ENCODE measurements at regions of chr19 and their contacts with region 1.

Region 1: GRCh38 chr19:11482384-11483050 is 1.7 kb upstream of the ELAVL3 start:
- DNase-seq: peak; percentile 84
- H3K4me3 Mint-ChIP-seq: peak overlapping the region; percentile 82
- H3K27ac Mint-ChIP-seq: peak overlapping the region; percentile 88
- H3K4me1 Mint-ChIP-seq: peaks cover 16% of the 10 kb centered on the region
- H3K27me3 Mint-ChIP-seq: peaks cover 25% of the 10 kb centered on the region

Region 2: GRCh38 chr19:11293433-11294389 is 188.8 kb before region 1 on chr19:
- intact Hi-C with region 1: loop called (anchors 1 kb)
- DNase-seq: peak; percentile 72
- H3K4me3 Mint-ChIP-seq: peak overlapping the region; percentile 49
- H3K27ac Mint-ChIP-seq: no peak overlapping the region
- H3K4me1 Mint-ChIP-seq: peaks cover 10% of the 10 kb centered on the region
- H3K27me3 Mint-ChIP-seq: peaks cover 20% of the 10 kb centered on the region

Region 3: GRCh38 chr19:11380653-11381534 is 101.6 kb before region 1 on chr19:
- intact Hi-C with region 1: loop called (anchors 1 kb)
- DNase-seq: peak; percentile 96
- H3K4me3 Mint-ChIP-seq: peak overlapping the region; percentile 88
- H3K27ac Mint-ChIP-seq: peak overlapping the region; percentile 100
- H3K4me1 Mint-ChIP-seq: peaks cover 32% of the 10 kb centered on the region
- H3K27me3 Mint-ChIP-seq: peaks cover 16% of the 10 kb centered on the region

Region 4: DNA sequence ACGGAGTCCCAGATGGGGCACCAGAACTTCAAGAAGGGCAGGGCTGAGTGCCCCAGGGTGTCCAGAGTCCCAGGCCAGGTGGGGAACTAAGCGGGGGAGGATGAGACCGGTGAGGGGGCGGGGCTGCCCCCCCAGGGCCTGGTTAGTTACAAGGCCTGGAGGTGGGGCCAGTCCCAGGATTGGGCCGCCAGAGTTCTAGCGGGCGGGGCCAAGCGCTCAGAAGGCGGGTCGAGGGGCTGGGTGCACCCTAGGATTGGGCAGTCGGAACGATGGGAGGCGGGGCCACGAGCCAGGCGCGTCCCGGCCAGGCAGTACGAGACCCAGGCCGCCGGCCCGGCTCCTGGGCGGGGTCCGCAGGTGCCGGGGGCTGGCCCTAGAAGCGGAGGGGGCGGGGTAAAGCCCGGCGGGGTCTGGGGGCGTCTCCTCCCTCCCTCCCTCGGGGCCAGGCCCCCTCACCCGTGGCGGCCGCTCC is 22.6 kb after region 1 on chr19:
- intact Hi-C with region 1: loop called (anchors 1 kb)
- DNase-seq: peak; percentile 97
- H3K4me3 Mint-ChIP-seq: peak overlapping the region; percentile 91
- H3K27ac Mint-ChIP-seq: peak overlapping the region; percentile 84
- H3K4me1 Mint-ChIP-seq: peaks cover 13% of the 10 kb centered on the region
- H3K27me3 Mint-ChIP-seq: no peaks in the 10 kb centered on the region

Region 5: DNA sequence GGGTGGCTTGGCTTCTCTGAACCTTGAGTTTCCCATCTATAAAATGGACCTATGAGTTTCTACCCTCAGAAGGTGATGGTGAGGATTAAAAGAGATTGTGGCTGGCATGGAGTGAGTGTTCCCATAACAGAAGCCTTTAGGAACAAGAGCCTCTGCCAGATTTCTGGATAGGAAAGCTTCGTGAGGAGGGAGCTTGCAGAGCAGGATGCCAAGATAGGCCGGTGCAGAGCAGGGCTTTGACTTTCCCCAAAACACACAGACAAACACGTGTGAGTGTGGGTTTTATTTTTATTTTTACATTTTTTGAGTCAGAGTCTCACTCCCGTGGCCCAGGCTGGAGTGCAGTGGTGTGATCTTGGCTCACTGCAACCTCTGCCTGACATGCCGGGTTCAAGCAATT is 52.4 kb after region 1 on chr19:
- intact Hi-C with region 1: no loop called
- DNase-seq: no peak
- H3K4me3 Mint-ChIP-seq: no peak overlapping the region
- H3K27ac Mint-ChIP-seq: peak overlapping the region; percentile 56
- H3K4me1 Mint-ChIP-seq: peaks cover 15% of the 10 kb centered on the region
- H3K27me3 Mint-ChIP-seq: peaks cover 12% of the 10 kb centered on the region

Region 6: GRCh38 chr19:11558881-11559828 is 76.6 kb after region 1 on chr19 and contains the start of gene ELOF1:
- intact Hi-C with region 1: loop called (anchors 1 kb)
- DNase-seq: peak; percentile 97
- H3K4me3 Mint-ChIP-seq: peak within 1 kb of the TSS; percentile 92
- H3K27ac Mint-ChIP-seq: peak within 1 kb of the TSS; percentile 96
- H3K4me1 Mint-ChIP-seq: peaks cover 42% of the 10 kb centered on the region
- H3K27me3 Mint-ChIP-seq: no peaks in the 10 kb centered on the region
- total RNA-seq, gene ELOF1: 76.7 and 77.6 TPM in 2 replicates